ENCODE measurements at regions of chr11 and their contacts with region 1.

Region 1: GRCh38 chr11:129658526-129658867 is 157.2 kb upstream of the TMEM45B start:
- DNase-seq: no peak
- ATAC-seq: peak; percentile 32; the same call in 1 of the 2 replicates
- H3K4me3 ChIP-seq: no peak overlapping the region
- H3K27ac ChIP-seq: no peak overlapping the region
- H3K4me1 ChIP-seq: no peaks in the 10 kb centered on the region
- H3K27me3 ChIP-seq: no peaks in the 10 kb centered on the region
- CTCF ChIP-seq: 0 out of 6 replicates have a peak, but pooled peaks of 1 of the 3 experiments have one; percentile 14
- POLR2A ChIP-seq: no peak
- RAD21 ChIP-seq: no peak

Region 2: DNA sequence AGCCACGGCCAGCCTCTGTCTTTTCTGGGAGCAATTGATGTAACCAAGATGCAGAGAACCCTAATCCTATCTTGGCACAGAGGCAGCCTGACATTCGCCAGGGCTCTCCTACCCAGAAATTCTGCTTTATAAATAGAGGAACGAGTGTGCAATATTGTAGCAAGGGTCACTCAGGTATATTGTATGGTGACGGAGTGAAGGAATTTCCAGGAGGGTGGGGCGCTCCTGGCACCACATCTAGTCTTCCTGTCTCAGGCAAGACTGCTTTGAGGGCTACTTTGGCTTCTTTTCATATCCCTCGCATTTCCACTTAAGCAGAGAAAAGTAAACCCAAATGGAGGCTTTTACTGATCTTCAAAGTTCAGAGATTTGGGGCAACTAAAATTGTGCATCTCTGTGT is 168.5 kb before region 1 on chr11:
- CTCF ChIA-PET with region 1: no interaction called
- POLR2A ChIA-PET with region 1: no interaction called
- RAD21 ChIA-PET with region 1: no interaction called
- intact Hi-C with region 1: loop called (anchors 10 kb)
- DNase-seq: no peak
- ATAC-seq: no peak
- H3K4me3 ChIP-seq: no peak overlapping the region
- H3K27ac ChIP-seq: no peak overlapping the region
- H3K4me1 ChIP-seq: no peaks in the 10 kb centered on the region
- H3K27me3 ChIP-seq: 0 out of 2 replicates have a peak, but pooled peaks cover 4% of the 10 kb centered on the region
- CTCF ChIP-seq: no peak
- POLR2A ChIP-seq: no peak
- RAD21 ChIP-seq: no peak

Region 3: GRCh38 chr11:129681344-129682114 is 23.0 kb after region 1 on chr11:
- CTCF ChIA-PET with region 1: no interaction called
- POLR2A ChIA-PET with region 1: no interaction called
- RAD21 ChIA-PET with region 1: no interaction called
- intact Hi-C with region 1: no loop called
- DNase-seq: no peak
- ATAC-seq: no peak
- H3K4me3 ChIP-seq: no peak overlapping the region
- H3K27ac ChIP-seq: no peak overlapping the region
- H3K4me1 ChIP-seq: no peaks in the 10 kb centered on the region
- H3K27me3 ChIP-seq: no peaks in the 10 kb centered on the region
- CTCF ChIP-seq: no peak
- POLR2A ChIP-seq: no peak
- RAD21 ChIP-seq: no peak

Region 4: GRCh38 chr11:129695575-129696308 is 37.2 kb after region 1 on chr11:
- CTCF ChIA-PET with region 1: no interaction called
- POLR2A ChIA-PET with region 1: no interaction called
- RAD21 ChIA-PET with region 1: no interaction called
- intact Hi-C with region 1: no loop called
- DNase-seq: peak; percentile 21
- ATAC-seq: peak; percentile 90
- H3K4me3 ChIP-seq: no peak overlapping the region
- H3K27ac ChIP-seq: no peak overlapping the region
- H3K4me1 ChIP-seq: peaks cover 0 to 5% of the 10 kb centered on the region in 2 experiments; a peak in 1 of 4 replicates
- H3K27me3 ChIP-seq: no peaks in the 10 kb centered on the region
- CTCF ChIP-seq: peak; percentile 69 to 80 (median 79)
- POLR2A ChIP-seq: no peak
- RAD21 ChIP-seq: peak; percentile 78